AG04450 (cell line): ENCODE measurements at regions of chr9 and their contacts with region 1.

Region 1: DNA sequence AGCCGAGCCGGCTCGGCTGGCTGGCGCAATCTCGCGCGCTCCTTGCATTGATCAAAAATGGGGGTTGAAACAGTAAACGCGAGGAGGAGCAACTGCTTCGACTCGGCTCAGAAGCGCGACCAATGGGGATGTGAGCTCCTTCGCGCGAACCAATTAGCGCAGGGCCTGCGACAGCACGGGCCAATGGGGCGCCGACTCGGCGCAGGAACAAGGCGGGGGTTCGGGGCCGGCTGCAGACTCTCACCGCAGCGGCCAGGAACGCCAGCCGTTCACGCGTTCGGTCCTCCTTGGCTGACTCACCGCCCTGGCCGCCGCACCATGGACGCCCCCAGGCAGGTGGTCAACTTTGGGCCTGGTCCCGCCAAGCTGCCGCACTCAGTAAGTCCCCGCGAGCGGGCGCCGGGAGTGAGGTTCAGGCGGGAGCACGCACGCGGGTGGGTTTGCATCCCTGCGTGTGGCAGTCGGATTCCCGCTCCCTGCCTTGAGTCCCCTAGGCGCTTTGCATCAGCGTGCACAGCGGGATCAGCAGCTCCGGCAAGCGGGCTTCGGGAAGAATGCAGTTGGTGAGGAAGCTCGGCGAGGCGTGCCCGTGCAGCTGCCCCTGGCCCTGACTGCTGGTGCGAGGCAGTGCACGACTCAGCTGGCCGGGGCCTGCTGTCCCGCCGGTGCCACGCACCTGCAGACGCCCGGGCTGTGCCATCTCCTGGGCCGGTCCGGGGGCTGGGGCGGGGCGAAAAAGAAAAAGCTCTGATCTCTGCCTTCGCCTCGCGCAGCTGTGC is at the start of gene PSAT1:
- DNase-seq: peak; percentile 96
- H3K4me3 ChIP-seq: peak within 1 kb of the TSS; percentile 99
- H3K27ac ChIP-seq: peak within 1 kb of the TSS; percentile 97
- H3K27me3 ChIP-seq: no peaks in the 10 kb centered on the region
- CTCF ChIP-seq: peak; percentile 10; the same call in 1 of the 2 replicates
- polyA plus RNA-seq, gene PSAT1: 216 and 271 TPM in 2 replicates

Region 2: DNA sequence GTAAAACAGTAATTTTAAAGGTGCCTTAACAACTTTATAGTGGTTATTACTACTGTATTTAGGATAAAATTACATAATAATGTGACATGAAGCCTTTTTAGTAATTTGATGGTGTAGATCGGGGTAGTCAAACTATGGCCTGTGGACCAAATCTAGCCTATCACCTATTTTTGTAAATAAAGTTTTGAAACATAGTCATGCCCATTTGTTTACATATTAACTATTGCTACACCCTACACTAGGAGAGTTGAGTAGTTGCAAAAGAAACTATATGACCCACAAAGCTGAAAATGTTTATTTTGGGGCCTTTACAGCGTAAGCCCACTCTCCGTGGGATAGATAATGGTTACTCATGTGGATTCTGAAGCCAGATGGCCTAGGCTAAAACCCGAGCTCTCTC is 55.0 kb before region 1 on chr9:
- CTCF ChIA-PET with region 1: no interaction called
- POLR2A ChIA-PET with region 1: no interaction called
- DNase-seq: no peak
- H3K4me3 ChIP-seq: no peak overlapping the region
- H3K27ac ChIP-seq: no peak overlapping the region
- H3K27me3 ChIP-seq: no peaks in the 10 kb centered on the region
- CTCF ChIP-seq: no peak

Region 3: GRCh38 chr9:78273761-78274160 is 23.3 kb before region 1 on chr9:
- CTCF ChIA-PET with region 1: interaction called, 8 read pairs
- POLR2A ChIA-PET with region 1: interaction called, 12 read pairs
- DNase-seq: no peak
- H3K4me3 ChIP-seq: no peak overlapping the region
- H3K27ac ChIP-seq: no peak overlapping the region
- H3K27me3 ChIP-seq: no peaks in the 10 kb centered on the region
- CTCF ChIP-seq: no peak

Region 4: DNA sequence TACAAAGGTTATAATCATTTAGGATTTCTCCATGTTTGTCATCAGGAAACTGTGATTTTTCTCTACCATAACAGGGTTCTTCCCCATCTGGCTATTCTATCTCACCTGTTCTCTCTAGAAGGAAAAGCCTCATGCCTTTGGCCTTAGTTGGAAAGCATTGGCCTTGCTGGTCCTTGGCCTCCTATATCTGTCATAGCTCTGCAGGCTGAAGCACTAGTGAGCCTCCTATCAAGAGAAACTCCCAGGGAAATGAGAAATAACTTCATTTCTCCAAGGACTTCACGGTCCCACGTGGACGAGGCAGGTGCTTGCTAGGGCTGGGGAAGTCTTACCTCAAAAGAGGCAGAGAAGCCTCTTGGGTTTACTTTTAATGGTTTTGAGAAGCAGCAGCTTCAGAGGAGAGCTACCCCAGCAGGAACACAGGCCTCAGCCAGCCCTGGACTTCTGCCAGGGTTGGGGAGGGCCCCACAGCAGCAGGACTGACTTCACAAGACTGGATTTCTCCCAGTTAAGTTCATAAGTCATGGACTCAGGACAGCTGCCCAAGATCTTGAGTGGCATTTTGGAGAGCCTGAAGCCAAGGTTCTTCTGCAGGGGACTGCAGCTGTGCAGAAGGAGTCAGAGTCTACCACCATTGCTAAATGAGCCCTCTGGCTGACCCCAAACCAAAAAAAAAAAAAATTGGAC is 16.0 kb before region 1 on chr9:
- CTCF ChIA-PET with region 1: interaction called, 8 read pairs
- POLR2A ChIA-PET with region 1: interaction called, 10 read pairs
- DNase-seq: no peak
- H3K4me3 ChIP-seq: no peak overlapping the region
- H3K27ac ChIP-seq: no peak overlapping the region
- H3K27me3 ChIP-seq: no peaks in the 10 kb centered on the region
- CTCF ChIP-seq: no peak